ENCODE measurements at regions of chr3 and their contacts with region 1.

Region 1: GRCh38 chr3:101724329-101725193 is at the start of gene CEP97:
- DNase-seq: peak; percentile 78
- ATAC-seq: peak; percentile 95
- H3K4me3 ChIP-seq: peak within 1 kb of the TSS; percentile 79
- H3K27ac ChIP-seq: peak within 1 kb of the TSS; percentile 38
- H3K4me1 ChIP-seq: peaks cover 15% of the 10 kb centered on the region
- H3K27me3 ChIP-seq: no peaks in the 10 kb centered on the region
- CTCF ChIP-seq: no peak
- EP300 ChIP-seq: no peak
- POLR2A ChIP-seq: peak; percentile 52; the same call in 1 of the 2 replicates
- RAD21 ChIP-seq: no peak
- polyA plus RNA-seq, gene CEP97: 1.9 to 4.3 TPM

Region 2: GRCh38 chr3:101685870-101686412 is 38.6 kb before region 1 on chr3:
- CTCF ChIA-PET with region 1: interaction called, 9 read pairs
- POLR2A ChIA-PET with region 1: interaction called, 4 read pairs
- RAD21 ChIA-PET with region 1: interaction called, 5 read pairs
- SMC1A ChIA-PET with region 1: interaction called, 10 read pairs
- in situ Hi-C with region 1: no loop called
- intact Hi-C with region 1: no loop called
- DNase-seq: no peak
- ATAC-seq: peak; percentile 22
- H3K4me3 ChIP-seq: peak overlapping the region; percentile 76
- H3K27ac ChIP-seq: peak overlapping the region; percentile 76
- H3K4me1 ChIP-seq: peaks cover 10% of the 10 kb centered on the region
- H3K27me3 ChIP-seq: no peaks in the 10 kb centered on the region
- CTCF ChIP-seq: no peak
- EP300 ChIP-seq: no peak
- POLR2A ChIP-seq: no peak
- RAD21 ChIP-seq: no peak

Region 3: DNA sequence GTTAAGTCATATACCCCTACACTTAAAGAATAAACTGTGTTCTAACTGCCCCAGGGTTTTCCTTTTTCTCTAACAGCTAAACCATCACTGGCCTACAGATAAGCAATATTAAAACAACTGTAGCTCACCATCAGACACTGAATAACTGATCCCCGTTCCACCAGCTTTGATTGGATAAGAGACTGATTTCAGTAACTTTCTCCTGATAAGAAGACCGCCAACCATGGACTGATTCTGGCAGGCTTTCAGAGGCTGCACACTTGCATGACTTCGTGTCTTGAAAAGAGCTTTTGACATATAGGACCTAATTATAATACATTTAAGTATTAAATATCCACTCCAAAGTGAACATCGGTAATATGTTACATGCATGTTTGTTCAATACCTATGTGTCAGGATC is 15.4 kb before region 1 on chr3:
- CTCF ChIA-PET with region 1: interaction called, 4 read pairs
- POLR2A ChIA-PET with region 1: interaction called, 3 read pairs
- RAD21 ChIA-PET with region 1: interaction called, 4 read pairs
- SMC1A ChIA-PET with region 1: interaction called, 11 read pairs
- in situ Hi-C with region 1: no loop called
- intact Hi-C with region 1: no loop called
- DNase-seq: no peak
- ATAC-seq: no peak
- H3K4me3 ChIP-seq: no peak overlapping the region
- H3K27ac ChIP-seq: no peak overlapping the region
- H3K4me1 ChIP-seq: no peaks in the 10 kb centered on the region
- H3K27me3 ChIP-seq: no peaks in the 10 kb centered on the region
- CTCF ChIP-seq: no peak
- EP300 ChIP-seq: no peak
- POLR2A ChIP-seq: no peak
- RAD21 ChIP-seq: no peak

Measured in GM12878 (cell line).